Dorsolateral prefrontal cortex (tissue), 120 donors: ENCODE measurements at regions of chr17 and their contacts with region 1.

Region 1: DNA sequence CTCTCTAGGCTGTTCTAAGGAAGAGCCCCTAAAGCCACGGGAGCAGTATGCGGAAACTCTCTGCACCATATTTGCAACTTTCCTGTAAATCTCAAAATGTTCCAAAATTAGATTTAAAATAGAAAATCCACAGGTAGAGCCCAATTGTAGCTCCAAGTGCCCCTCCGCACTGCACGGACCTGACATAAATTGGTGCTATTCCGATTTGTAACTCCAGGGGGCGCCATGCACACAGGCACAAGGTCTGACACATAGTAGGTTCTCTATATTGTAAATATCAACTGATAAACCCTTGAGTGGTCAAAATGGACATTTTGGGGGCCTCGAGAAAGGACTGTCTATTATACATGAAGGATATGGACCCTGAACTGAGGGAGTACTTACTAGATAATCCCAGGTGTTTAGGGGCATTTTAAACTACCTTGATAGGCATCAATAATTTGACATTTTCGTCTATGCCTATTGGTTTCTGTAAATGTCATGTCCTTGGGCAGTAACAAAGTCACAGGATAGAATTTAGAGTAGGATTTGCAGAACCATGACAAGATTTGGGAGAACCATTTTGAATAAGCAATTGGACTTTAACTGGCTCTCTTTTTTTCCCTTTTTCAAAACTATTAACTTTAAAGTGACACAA is 36.6 kb upstream of the TMEM132E start:
- DNase-seq: peak in 6 of 10 donors; percentile 28 to 58 (median 49)
- H3K4me3 ChIP-seq: no peak overlapping the region
- H3K27ac ChIP-seq: no peak overlapping the region
- H3K27me3 ChIP-seq: peaks cover 0 to 10% (median 0%) of the 10 kb centered on the region in 45 donors
- CTCF ChIP-seq: peak; percentile 78 to 98 (median 92)

Region 2: DNA sequence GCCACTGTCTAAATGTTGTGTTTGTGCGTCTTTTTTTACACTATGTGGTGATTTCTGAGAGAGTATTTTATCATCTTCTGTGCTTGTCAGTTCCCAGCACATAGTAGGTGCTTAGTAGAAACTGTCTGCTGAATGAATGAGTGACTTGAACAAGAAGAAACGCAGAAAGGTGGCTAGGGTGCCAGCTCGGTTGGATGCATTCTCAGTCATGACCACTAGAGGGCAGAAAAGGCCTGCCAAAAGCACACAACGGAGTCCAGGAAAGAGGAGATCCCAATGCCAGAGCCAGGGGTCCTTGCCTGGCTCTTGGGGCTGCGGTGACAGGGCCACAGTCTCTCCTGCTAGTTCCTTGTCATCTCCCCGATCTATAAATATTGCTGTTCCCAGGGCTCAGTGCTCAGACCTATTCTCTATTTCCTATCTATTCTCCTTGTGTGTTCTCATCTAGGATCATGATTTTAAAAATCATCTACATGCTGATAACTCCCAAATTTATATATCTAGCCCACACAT is 122.5 kb before region 1 on chr17:
- intact Hi-C with region 1: loop called in 1 of 2 experiments (anchors 5 kb)
- DNase-seq: peak in 9 of 10 donors; percentile 41 to 76 (median 65)
- H3K4me3 ChIP-seq: no peak overlapping the region
- H3K27ac ChIP-seq: no peak overlapping the region
- H3K27me3 ChIP-seq: peaks cover 0 to 52% (median 17%) of the 10 kb centered on the region in 45 donors
- CTCF ChIP-seq: peak; percentile 86 to 99 (median 95)

Region 3: DNA sequence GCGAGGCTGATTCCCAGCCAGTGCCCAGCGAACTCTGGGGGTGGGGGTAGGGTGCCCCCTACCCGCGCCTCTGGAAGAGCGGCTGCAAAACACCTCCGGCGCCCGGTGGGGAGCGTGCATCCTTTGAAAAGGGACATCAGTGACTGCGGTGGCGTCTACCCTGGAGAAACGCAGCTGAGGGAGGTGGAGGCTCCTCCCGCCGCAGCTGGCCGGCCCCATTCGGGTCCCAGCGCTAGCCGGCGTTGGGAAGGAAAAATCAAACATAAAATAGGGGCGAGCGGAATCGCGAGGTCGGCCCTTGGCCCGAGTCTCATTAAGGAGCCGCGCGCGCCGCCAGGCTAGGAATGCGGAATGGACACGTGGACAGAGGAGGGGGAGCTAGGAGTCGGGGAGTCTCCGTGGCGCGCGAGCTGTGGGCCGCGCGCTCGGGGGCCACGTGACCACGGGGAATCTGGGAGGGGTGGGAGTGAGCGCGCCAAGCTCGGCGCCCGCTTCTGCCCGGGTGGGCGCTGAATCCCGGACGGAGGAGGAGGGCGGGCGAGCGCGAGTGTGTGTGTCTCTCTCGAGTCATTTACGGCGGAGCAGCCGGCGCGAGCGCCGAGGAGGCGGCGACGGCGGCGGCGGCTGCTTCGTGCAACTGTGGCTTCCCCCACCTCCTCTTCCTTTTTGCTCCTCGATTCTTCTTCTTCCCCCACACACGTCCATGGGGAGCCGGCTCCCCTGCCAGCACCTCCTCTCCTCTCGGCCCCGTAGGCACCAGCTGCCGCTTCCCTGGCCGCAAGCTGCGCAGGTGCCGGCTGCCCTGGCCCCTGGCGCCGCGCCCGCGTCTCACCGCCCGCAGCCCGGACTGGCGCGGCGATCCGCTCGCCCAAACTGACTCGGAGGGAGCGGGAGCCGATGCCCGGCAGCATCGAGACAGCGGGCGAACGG is 36.5 kb after region 1 on chr17 and contains the start of gene TMEM132E:
- intact Hi-C with region 1: loop called in 1 of 2 experiments (anchors 5 kb)
- DNase-seq: peak; percentile 72 to 88 (median 84)
- H3K4me3 ChIP-seq: peak within 1 kb of the TSS; percentile 51 to 89 (median 71)
- H3K27ac ChIP-seq: peak within 1 kb of the TSS in 52 of 59 donors; percentile 5 to 90 (median 72)
- H3K27me3 ChIP-seq: peaks cover 0 to 19% (median 0%) of the 10 kb centered on the region in 45 donors
- CTCF ChIP-seq: peak in 17 of 56 donors; percentile 4 to 40 (median 20)
- total RNA-seq, gene TMEM132E: 4.4 to 21.1 (median 11.1) TPM